A673 (cell line): ENCODE measurements at regions of chr17 and their contacts with region 1.

Region 1: GRCh38 chr17:3012926-3013581 is 50.4 kb downstream of the OR1D5 start:
- DNase-seq: peak; percentile 35
- H3K4me3 ChIP-seq: no peak overlapping the region
- H3K27ac ChIP-seq: no peak overlapping the region
- H3K4me1 ChIP-seq: no peaks in the 10 kb centered on the region
- H3K27me3 ChIP-seq: no peaks in the 10 kb centered on the region
- CTCF ChIP-seq: peak; percentile 55

Region 2: DNA sequence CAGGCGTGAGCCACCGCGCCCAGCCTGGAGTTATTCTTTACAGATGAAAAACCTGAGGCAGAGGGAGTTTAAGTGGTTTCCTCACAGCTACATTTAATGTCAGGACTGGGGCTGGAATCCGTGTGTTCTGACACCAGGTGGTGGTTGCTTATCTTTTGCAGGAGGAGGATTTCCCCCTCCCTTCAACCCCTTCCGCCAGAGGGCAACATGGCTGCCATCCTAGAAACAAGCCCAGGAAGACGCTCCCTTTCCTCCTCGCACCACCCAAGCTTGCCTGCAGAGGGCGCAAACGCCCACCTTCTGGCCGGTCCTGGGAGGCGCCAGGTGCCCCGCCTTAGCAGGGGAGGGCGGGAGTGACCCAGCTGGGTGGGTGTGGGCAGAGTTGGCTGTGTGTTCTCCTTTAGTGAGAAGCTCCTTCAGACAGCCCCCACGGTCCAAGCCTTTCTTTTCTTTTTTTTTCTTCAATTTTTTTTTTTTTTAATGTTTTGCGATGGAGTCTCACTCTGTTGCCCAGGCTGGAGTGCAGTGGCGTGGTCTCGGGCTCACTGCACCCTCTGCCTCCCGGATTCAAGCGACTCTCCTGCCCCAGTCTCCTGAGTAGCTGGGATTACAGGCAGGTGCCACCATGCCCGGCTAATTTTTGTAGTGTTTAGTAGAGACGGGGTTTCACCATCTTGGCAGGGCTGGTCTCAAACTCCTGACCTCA is 226.7 kb before region 1 on chr17:
- CTCF ChIA-PET with region 1: interaction called, 10 read pairs
- POLR2A ChIA-PET with region 1: no interaction called
- intact Hi-C with region 1: no loop called
- DNase-seq: peak; percentile 91
- H3K4me3 ChIP-seq: no peak overlapping the region
- H3K27ac ChIP-seq: no peak overlapping the region
- H3K4me1 ChIP-seq: no peaks in the 10 kb centered on the region
- H3K27me3 ChIP-seq: no peaks in the 10 kb centered on the region
- CTCF ChIP-seq: peak; percentile 97

Region 3: DNA sequence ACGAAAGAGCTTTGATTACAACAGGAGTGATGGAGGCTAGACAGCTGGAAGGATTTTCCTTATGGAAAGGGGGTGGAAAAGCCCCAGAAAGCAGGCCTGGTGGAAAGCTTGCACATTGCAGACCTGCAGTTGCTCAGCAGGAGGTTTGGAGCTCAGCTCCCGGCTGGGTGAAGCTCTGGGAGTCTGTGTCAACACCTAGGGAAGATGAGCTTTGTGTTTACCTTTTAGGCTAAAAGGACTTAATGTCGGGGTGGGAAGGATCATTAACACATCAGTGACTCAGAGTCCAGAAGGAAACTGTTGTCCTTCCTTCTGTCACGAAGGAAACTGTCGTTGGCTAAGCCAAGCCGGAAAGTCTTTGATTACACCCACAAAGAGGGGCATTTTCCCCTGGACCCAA is 168.6 kb before region 1 on chr17:
- CTCF ChIA-PET with region 1: interaction called, 6 read pairs
- POLR2A ChIA-PET with region 1: no interaction called
- intact Hi-C with region 1: loop called (anchors 5 kb)
- DNase-seq: no peak
- H3K4me3 ChIP-seq: no peak overlapping the region
- H3K27ac ChIP-seq: no peak overlapping the region
- H3K4me1 ChIP-seq: no peaks in the 10 kb centered on the region
- H3K27me3 ChIP-seq: peaks cover 5% of the 10 kb centered on the region
- CTCF ChIP-seq: no peak

Region 4: GRCh38 chr17:3104322-3104721 is 91.3 kb after region 1 on chr17 and contains the start of gene OR1D2:
- CTCF ChIA-PET with region 1: no interaction called
- POLR2A ChIA-PET with region 1: no interaction called
- intact Hi-C with region 1: no loop called
- DNase-seq: no peak
- H3K4me3 ChIP-seq: no peak within 1 kb of the TSS
- H3K27ac ChIP-seq: no peak within 1 kb of the TSS
- H3K4me1 ChIP-seq: no peaks in the 10 kb centered on the region
- H3K27me3 ChIP-seq: peaks cover 36% of the 10 kb centered on the region
- CTCF ChIP-seq: no peak
- total RNA-seq, gene OR1D2: not detected in 2 replicates